MCF 10A (cell line): ENCODE measurements at regions of chr6 and their contacts with region 1.

Region 1: DNA sequence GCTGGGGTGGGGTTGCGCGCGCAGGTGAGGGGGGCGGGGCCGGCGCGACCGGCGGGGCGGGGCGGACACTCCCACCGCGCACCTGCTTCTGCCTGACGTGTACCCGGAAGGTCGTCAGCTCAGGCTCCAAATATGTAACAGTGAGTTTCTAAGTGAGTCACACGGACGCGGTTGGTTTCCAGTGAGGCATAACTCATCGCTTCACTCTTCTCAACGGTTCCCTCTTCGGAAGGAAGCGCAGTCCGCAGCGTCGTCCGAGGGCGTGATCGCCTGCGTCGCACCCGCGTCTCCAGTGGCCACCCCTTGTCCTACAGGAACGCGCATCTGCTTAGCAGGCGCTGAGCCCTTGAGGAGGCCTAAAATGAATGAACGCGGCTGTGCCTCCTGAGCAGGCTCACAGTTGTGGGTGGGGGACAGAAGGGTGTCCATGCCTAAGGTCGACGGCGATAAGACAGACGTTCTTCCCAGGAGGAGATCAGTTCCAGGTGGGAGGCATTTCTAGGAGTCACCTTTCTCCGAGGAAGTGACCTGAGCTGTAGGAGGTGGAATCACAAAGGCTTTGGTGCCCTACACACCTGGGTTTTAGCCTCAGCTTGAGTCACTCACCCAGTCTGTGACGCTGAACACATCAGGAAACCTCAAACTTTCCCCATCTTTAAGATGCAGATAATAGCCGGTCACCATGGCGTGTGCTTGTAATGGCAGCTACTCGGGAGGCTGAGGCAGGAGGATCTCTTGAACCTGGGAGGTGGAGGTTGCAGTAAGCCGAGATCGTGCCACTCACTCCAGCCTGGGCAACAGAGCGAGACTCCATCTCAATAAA is 50.9 kb upstream of the EZR start:
- DNase-seq: peak; percentile 98
- H3K4me3 Mint-ChIP-seq: peak overlapping the region; percentile 83
- H3K27ac Mint-ChIP-seq: peak overlapping the region; percentile 100
- H3K4me1 Mint-ChIP-seq: peaks cover 14% of the 10 kb centered on the region
- H3K27me3 Mint-ChIP-seq: no peaks in the 10 kb centered on the region
- CTCF ChIP-seq: no peak

Region 2: GRCh38 chr6:158644231-158645063 is 225.6 kb before region 1 on chr6 and contains the start of gene DYNLT1:
- CTCF ChIA-PET with region 1: no interaction called
- POLR2A ChIA-PET with region 1: interaction called, 11 read pairs
- intact Hi-C with region 1: no loop called
- DNase-seq: peak; percentile 90
- H3K4me3 Mint-ChIP-seq: peak within 1 kb of the TSS; percentile 93
- H3K27ac Mint-ChIP-seq: peak within 1 kb of the TSS; percentile 94
- H3K4me1 Mint-ChIP-seq: peaks cover 55% of the 10 kb centered on the region
- H3K27me3 Mint-ChIP-seq: no peaks in the 10 kb centered on the region
- CTCF ChIP-seq: no peak
- total RNA-seq, gene DYNLT1: 122 and 156 TPM in 2 replicates

Region 3: GRCh38 chr6:158799051-158799792 is 70.8 kb before region 1 on chr6:
- CTCF ChIA-PET with region 1: interaction called, 4 read pairs
- POLR2A ChIA-PET with region 1: interaction called, 20 read pairs
- intact Hi-C with region 1: no loop called
- DNase-seq: peak; percentile 36
- H3K4me3 Mint-ChIP-seq: no peak overlapping the region
- H3K27ac Mint-ChIP-seq: peak overlapping the region; percentile 75
- H3K4me1 Mint-ChIP-seq: peaks cover 37% of the 10 kb centered on the region
- H3K27me3 Mint-ChIP-seq: no peaks in the 10 kb centered on the region
- CTCF ChIP-seq: peak; percentile 9

Region 4: GRCh38 chr6:158819213-158819909 is 50.7 kb before region 1 on chr6 and contains the start of gene EZR:
- CTCF ChIA-PET with region 1: interaction called, 5 read pairs
- POLR2A ChIA-PET with region 1: interaction called, 35 read pairs
- intact Hi-C with region 1: loop called (anchors 1 kb)
- DNase-seq: peak; percentile 76
- H3K4me3 Mint-ChIP-seq: peak within 1 kb of the TSS; percentile 97
- H3K27ac Mint-ChIP-seq: peak within 1 kb of the TSS; percentile 97
- H3K4me1 Mint-ChIP-seq: peaks cover 17% of the 10 kb centered on the region
- H3K27me3 Mint-ChIP-seq: no peaks in the 10 kb centered on the region
- CTCF ChIP-seq: no peak
- total RNA-seq, gene EZR: 243 and 296 TPM in 2 replicates

Region 5: GRCh38 chr6:158853072-158853871 is 16.8 kb before region 1 on chr6:
- CTCF ChIA-PET with region 1: interaction called, 7 read pairs
- POLR2A ChIA-PET with region 1: interaction called, 91 read pairs
- intact Hi-C with region 1: loop called (anchors 1 kb)
- DNase-seq: peak; percentile 97
- H3K4me3 Mint-ChIP-seq: no peak overlapping the region
- H3K27ac Mint-ChIP-seq: no peak overlapping the region
- H3K4me1 Mint-ChIP-seq: peaks cover 15% of the 10 kb centered on the region
- H3K27me3 Mint-ChIP-seq: no peaks in the 10 kb centered on the region
- CTCF ChIP-seq: no peak

Region 6: DNA sequence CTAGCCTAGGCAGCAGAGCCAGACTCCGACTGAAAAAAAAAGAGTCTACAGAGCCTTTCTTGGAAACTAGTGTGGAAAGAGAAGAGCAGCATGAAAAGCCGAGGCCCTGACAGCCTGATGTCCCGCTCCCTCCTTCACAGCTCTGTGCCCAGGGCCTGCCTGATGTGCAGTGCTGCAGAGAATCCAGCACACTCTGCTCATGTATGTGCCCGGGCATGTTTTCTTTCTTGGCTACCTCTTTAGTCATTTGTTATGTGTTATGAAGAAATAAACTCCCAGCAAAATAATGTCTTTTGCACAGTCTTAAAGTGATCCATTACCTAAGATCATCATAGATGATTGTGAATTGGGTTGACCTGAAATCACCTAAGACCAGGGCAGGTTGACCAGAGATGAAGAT is 27.2 kb after region 1 on chr6:
- CTCF ChIA-PET with region 1: interaction called, 4 read pairs
- POLR2A ChIA-PET with region 1: interaction called, 21 read pairs
- intact Hi-C with region 1: no loop called
- DNase-seq: peak; percentile 48
- H3K4me3 Mint-ChIP-seq: no peak overlapping the region
- H3K27ac Mint-ChIP-seq: peak overlapping the region; percentile 80
- H3K4me1 Mint-ChIP-seq: peaks cover 6% of the 10 kb centered on the region
- H3K27me3 Mint-ChIP-seq: no peaks in the 10 kb centered on the region
- CTCF ChIP-seq: no peak

Region 7: GRCh38 chr6:158972241-158973233 is 102.5 kb after region 1 on chr6:
- CTCF ChIA-PET with region 1: interaction called, 5 read pairs
- POLR2A ChIA-PET with region 1: interaction called, 4 read pairs
- intact Hi-C with region 1: loop called (anchors 1 kb)
- DNase-seq: peak; percentile 63
- H3K4me3 Mint-ChIP-seq: no peak overlapping the region
- H3K27ac Mint-ChIP-seq: no peak overlapping the region
- H3K4me1 Mint-ChIP-seq: peaks cover 5% of the 10 kb centered on the region
- H3K27me3 Mint-ChIP-seq: no peaks in the 10 kb centered on the region
- CTCF ChIP-seq: peak; percentile 57